IMR-90 (cell line): ENCODE measurements at regions of chr10 and their contacts with region 1.

Region 1: GRCh38 chr10:132637477-132638129 is 100.0 kb downstream of the INPP5A start:
- DNase-seq: peak; percentile 73
- ATAC-seq: peak; percentile 89
- H3K4me3 ChIP-seq: no peak overlapping the region
- H3K27ac ChIP-seq: no peak overlapping the region
- H3K4me1 ChIP-seq: peaks cover 8% of the 10 kb centered on the region; the same call in 1 of the 2 replicates
- H3K27me3 ChIP-seq: no peaks in the 10 kb centered on the region
- CTCF ChIP-seq: peak; percentile 96
- POLR2A ChIP-seq: no peak
- RAD21 ChIP-seq: peak; percentile 95

Region 2: DNA sequence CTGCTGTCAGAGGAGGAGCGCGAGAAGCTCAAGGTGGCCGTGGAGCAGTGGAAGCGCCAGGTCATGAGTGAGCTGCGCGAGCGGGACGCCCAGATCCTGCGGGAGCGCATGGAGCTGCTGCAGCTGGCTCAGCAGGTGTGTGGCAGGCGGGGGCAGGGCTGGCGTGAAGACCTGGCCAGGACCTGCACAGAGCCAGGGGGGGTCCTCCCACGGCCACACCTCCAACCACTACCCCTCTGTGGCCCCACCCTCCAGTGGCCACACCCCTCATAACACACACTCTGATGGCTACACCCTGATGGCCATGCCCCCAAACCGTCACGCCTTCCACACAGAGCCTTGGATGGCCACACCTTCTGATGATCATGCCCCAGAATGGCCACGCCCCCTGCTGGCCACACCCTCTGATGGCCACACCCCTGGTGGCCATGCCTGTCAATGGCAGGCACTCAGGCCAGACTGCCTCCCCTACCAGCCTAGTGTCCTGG is 474.3 kb before region 1 on chr10:
- CTCF ChIA-PET with region 1: no interaction called
- POLR2A ChIA-PET with region 1: no interaction called
- dilution Hi-C with region 1: no loop called
- in situ Hi-C with region 1: no loop called
- intact Hi-C with region 1: no loop called
- DNase-seq: no peak
- ATAC-seq: peak; percentile 51
- H3K4me3 ChIP-seq: no peak overlapping the region
- H3K27ac ChIP-seq: no peak overlapping the region
- H3K4me1 ChIP-seq: no peaks in the 10 kb centered on the region
- H3K27me3 ChIP-seq: no peaks in the 10 kb centered on the region; the same call in 1 of the 2 replicates
- CTCF ChIP-seq: no peak; the same call in 1 of the 2 replicates
- POLR2A ChIP-seq: no peak
- RAD21 ChIP-seq: no peak

Region 3: DNA sequence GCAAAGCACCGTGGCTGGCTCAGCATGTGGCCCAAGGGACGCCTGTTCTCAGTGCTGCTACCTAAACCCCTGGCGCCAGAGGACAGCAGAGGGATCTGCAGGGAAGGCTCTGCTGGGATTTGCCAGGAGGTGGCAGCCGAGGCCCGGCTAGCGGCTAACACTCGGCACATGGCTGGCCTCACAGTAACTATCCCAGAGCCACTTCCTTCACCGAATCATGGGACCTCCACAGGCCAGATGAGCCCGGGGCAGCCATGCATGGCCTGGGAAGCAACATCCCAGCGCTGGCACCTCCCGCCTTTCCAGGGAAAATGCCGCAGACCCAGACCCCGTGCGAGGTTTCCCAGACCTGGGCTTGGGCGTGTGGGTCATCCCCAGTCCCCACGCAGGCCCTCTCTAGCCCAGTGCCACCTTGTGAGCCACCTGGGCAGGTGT is 414.4 kb before region 1 on chr10:
- CTCF ChIA-PET with region 1: no interaction called
- POLR2A ChIA-PET with region 1: no interaction called
- dilution Hi-C with region 1: no loop called
- in situ Hi-C with region 1: loop called (anchors 10 kb)
- intact Hi-C with region 1: loop called (anchors 1 kb)
- DNase-seq: peak; percentile 71
- ATAC-seq: peak; percentile 99
- H3K4me3 ChIP-seq: no peak overlapping the region
- H3K27ac ChIP-seq: no peak overlapping the region
- H3K4me1 ChIP-seq: no peaks in the 10 kb centered on the region
- H3K27me3 ChIP-seq: no peaks in the 10 kb centered on the region
- CTCF ChIP-seq: peak; percentile 100
- POLR2A ChIP-seq: peak; percentile 45; the same call in 1 of the 2 replicates
- RAD21 ChIP-seq: peak; percentile 99

Region 4: GRCh38 chr10:132387764-132388210 is 249.8 kb before region 1 on chr10:
- CTCF ChIA-PET with region 1: no interaction called
- POLR2A ChIA-PET with region 1: no interaction called
- dilution Hi-C with region 1: no loop called
- in situ Hi-C with region 1: loop called (anchors 10 kb)
- intact Hi-C with region 1: loop called (anchors 5 kb)
- DNase-seq: peak; percentile 36
- ATAC-seq: peak; percentile 78
- H3K4me3 ChIP-seq: no peak overlapping the region
- H3K27ac ChIP-seq: no peak overlapping the region
- H3K4me1 ChIP-seq: peaks cover 2% of the 10 kb centered on the region; the same call in 1 of the 2 replicates
- H3K27me3 ChIP-seq: peaks cover 5% of the 10 kb centered on the region; the same call in 1 of the 2 replicates
- CTCF ChIP-seq: peak; percentile 69
- POLR2A ChIP-seq: no peak
- RAD21 ChIP-seq: peak; percentile 65

Region 5: GRCh38 chr10:132396495-132397035 is 241.0 kb before region 1 on chr10:
- CTCF ChIA-PET with region 1: no interaction called
- POLR2A ChIA-PET with region 1: no interaction called
- dilution Hi-C with region 1: no loop called
- in situ Hi-C with region 1: loop called (anchors 10 kb)
- intact Hi-C with region 1: loop called (anchors 5 kb)
- DNase-seq: peak; percentile 31
- ATAC-seq: peak; percentile 72
- H3K4me3 ChIP-seq: peak overlapping the region; percentile 86
- H3K27ac ChIP-seq: no peak overlapping the region
- H3K4me1 ChIP-seq: peaks cover 21% of the 10 kb centered on the region
- H3K27me3 ChIP-seq: no peaks in the 10 kb centered on the region
- CTCF ChIP-seq: peak; percentile 44
- POLR2A ChIP-seq: 0 out of 2 replicates have a peak, but pooled peaks have one; percentile 34
- RAD21 ChIP-seq: no peak

Region 6: GRCh38 chr10:132458593-132459300 is 178.9 kb before region 1 on chr10:
- CTCF ChIA-PET with region 1: interaction called, 7 read pairs
- POLR2A ChIA-PET with region 1: no interaction called
- dilution Hi-C with region 1: no loop called
- in situ Hi-C with region 1: loop called (anchors 5 kb)
- intact Hi-C with region 1: loop called (anchors 1 kb)
- DNase-seq: no peak
- ATAC-seq: peak; percentile 95
- H3K4me3 ChIP-seq: no peak overlapping the region
- H3K27ac ChIP-seq: no peak overlapping the region
- H3K4me1 ChIP-seq: no peaks in the 10 kb centered on the region
- H3K27me3 ChIP-seq: peaks cover 9% of the 10 kb centered on the region; the same call in 1 of the 2 replicates
- CTCF ChIP-seq: peak; percentile 91
- POLR2A ChIP-seq: no peak
- RAD21 ChIP-seq: peak; percentile 97

Region 7: DNA sequence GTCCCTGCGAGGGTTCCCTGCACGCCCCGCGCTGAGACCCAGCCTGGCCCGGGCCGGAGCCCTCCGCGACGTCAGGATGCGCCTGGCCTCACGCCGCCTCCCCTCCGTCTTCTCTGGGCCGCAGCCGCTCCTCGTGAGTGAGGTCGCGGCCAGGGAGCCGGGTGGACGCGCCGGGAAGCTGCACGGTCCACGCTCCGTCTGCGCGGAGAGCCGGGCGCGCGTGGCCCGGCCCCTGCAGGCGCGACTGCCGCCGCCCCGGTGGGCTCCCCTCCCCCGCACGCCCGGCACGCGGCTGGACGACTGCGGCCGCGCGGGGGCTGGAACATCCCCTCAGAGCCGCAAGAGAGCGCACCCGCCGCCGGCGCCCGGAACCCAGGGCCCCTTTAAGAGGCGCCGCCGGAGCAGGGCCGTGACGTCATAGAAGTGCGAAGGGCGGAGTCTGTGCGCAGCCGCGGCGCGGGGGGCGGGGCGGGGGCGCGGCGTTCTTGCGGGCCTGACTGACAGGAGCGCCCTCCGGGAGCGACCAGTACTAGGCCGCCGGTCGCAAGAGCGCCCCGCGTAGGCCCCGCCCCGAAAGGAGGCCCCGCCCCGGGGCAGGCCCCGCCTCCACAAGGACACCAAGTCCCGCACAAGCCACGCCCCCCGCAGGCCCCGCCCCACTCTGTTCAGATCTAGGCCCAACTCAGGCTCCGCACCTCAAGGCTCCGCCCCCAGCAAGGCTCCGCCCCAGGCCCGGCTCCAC is 100.5 kb before region 1 on chr10:
- CTCF ChIA-PET with region 1: no interaction called
- POLR2A ChIA-PET with region 1: no interaction called
- dilution Hi-C with region 1: no loop called
- in situ Hi-C with region 1: no loop called
- intact Hi-C with region 1: loop called (anchors 1 kb)
- DNase-seq: peak; percentile 98
- ATAC-seq: peak; percentile 93
- H3K4me3 ChIP-seq: peak overlapping the region; percentile 74
- H3K27ac ChIP-seq: peak overlapping the region; percentile 87
- H3K4me1 ChIP-seq: peaks cover 28% of the 10 kb centered on the region
- H3K27me3 ChIP-seq: no peaks in the 10 kb centered on the region
- CTCF ChIP-seq: peak; percentile 46
- POLR2A ChIP-seq: no peak
- RAD21 ChIP-seq: peak; percentile 20

Region 8: DNA sequence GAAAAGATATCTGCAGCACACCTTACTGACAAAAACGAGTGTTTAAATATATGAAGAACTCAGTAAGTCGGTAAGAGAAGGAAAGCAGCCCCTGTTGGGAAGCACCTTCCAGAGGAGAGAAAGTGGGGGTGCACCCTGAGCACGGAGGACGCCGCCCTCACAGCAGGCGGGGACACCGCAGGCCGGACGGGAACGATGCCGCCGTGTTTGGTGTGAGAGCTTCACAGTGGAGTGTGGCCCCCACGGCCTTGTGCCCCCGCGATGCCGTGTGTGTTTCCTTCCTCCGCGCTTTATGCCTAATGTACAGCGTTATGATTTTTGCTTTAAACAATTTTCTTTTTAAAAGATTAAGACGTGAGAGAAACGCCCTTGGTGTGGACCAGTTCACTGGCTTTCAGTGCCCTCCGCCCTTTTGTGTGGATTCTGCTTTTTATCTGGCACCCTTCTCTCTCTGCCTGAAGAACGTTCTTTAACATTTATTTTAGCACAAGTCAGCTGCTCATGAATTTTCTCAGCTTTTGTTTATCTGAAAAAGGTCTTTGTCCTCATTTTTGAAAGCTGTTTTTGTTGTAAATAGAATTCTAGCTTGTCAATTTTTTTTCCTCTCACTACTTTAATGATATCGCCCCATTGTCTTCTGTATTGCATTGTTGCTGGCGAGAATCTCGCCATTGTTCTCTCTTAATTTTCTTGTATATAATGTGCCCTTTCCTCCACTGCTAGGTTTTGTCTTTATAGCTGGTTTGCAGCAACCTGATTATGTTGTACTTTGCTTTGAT is 10.7 kb after region 1 on chr10:
- CTCF ChIA-PET with region 1: no interaction called
- POLR2A ChIA-PET with region 1: no interaction called
- dilution Hi-C with region 1: no loop called
- in situ Hi-C with region 1: no loop called
- intact Hi-C with region 1: no loop called
- DNase-seq: no peak
- ATAC-seq: no peak
- H3K4me3 ChIP-seq: no peak overlapping the region
- H3K27ac ChIP-seq: no peak overlapping the region
- H3K4me1 ChIP-seq: no peaks in the 10 kb centered on the region
- H3K27me3 ChIP-seq: no peaks in the 10 kb centered on the region
- CTCF ChIP-seq: no peak
- POLR2A ChIP-seq: no peak
- RAD21 ChIP-seq: no peak